A673 (cell line): ENCODE measurements at regions of chr2 and their contacts with region 1.

Region 1: DNA sequence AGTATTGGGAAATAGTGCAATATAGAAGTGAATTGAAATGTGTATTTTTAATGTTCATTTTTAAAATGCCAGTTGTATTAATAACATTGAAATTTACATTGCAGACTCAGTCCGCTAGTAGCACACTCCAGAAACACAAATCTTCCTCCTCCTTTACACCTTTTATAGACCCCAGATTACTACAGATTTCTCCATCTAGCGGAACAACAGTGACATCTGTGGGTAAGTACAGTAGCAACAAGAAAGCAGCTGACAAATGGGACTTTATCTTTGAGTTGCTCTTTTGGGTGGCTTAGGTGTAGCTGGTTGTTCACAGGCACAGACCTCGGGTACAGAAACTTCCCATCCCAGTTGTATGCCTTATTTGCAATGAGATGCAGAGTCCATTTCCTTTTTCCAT is 118.2 kb upstream of the IL1R2 start:
- DNase-seq: peak; percentile 15
- H3K4me3 ChIP-seq: no peak overlapping the region
- H3K27ac ChIP-seq: no peak overlapping the region
- H3K4me1 ChIP-seq: no peaks in the 10 kb centered on the region
- H3K27me3 ChIP-seq: no peaks in the 10 kb centered on the region
- CTCF ChIP-seq: peak; percentile 43

Region 2: DNA sequence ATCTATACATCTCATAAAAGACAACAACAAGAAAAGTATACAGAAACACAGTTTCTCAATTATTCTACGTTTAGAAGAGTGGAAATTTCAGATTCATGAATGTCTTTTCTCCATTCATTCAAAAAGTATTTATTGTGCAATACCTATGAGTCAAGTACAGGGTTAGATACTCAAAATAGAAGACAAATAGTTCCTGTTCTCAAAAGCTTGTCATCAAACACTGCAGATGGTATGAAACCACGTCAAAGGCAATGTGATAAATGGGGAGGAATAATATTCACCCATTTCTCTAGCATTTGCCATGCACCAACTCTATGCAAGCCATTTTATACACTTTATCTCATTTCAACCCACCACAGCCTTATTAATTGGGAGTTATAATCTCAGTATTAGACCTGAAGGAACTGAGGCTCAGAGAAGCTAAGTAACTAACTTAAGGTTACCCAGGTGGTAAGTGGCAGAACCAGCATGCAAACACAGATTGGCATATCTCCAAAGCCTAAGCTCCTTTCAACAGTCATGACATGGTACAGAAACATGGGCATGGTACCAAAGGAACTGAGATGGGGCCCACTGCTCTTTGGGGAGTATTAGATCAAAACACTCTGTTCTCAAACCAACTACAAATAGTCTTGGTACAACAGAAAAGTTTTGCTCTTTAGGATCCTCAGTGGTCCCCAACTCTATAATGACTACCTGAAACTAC is 1120.8 kb before region 1 on chr2:
- CTCF ChIA-PET with region 1: no interaction called
- POLR2A ChIA-PET with region 1: no interaction called
- intact Hi-C with region 1: no loop called
- DNase-seq: no peak
- H3K4me3 ChIP-seq: no peak overlapping the region
- H3K27ac ChIP-seq: no peak overlapping the region
- H3K4me1 ChIP-seq: no peaks in the 10 kb centered on the region
- H3K27me3 ChIP-seq: no peaks in the 10 kb centered on the region
- CTCF ChIP-seq: no peak

Region 3: GRCh38 chr2:101419096-101419663 is 454.4 kb before region 1 on chr2:
- CTCF ChIA-PET with region 1: no interaction called
- POLR2A ChIA-PET with region 1: no interaction called
- intact Hi-C with region 1: loop called (anchors 10 kb)
- DNase-seq: peak; percentile 73
- H3K4me3 ChIP-seq: no peak overlapping the region
- H3K27ac ChIP-seq: no peak overlapping the region
- H3K4me1 ChIP-seq: no peaks in the 10 kb centered on the region
- H3K27me3 ChIP-seq: no peaks in the 10 kb centered on the region
- CTCF ChIP-seq: peak; percentile 77

Region 4: GRCh38 chr2:101566632-101567228 is 306.8 kb before region 1 on chr2:
- CTCF ChIA-PET with region 1: interaction called, 12 read pairs
- POLR2A ChIA-PET with region 1: no interaction called
- intact Hi-C with region 1: no loop called
- DNase-seq: no peak
- H3K4me3 ChIP-seq: no peak overlapping the region
- H3K27ac ChIP-seq: no peak overlapping the region
- H3K4me1 ChIP-seq: no peaks in the 10 kb centered on the region
- H3K27me3 ChIP-seq: peaks cover 24% of the 10 kb centered on the region
- CTCF ChIP-seq: no peak

Region 5: GRCh38 chr2:102632380-102633175 is 759.0 kb after region 1 on chr2:
- CTCF ChIA-PET with region 1: no interaction called
- POLR2A ChIA-PET with region 1: no interaction called
- intact Hi-C with region 1: no loop called
- DNase-seq: no peak
- H3K4me3 ChIP-seq: no peak overlapping the region
- H3K27ac ChIP-seq: no peak overlapping the region
- H3K4me1 ChIP-seq: no peaks in the 10 kb centered on the region
- H3K27me3 ChIP-seq: no peaks in the 10 kb centered on the region
- CTCF ChIP-seq: no peak